CD4-positive, alpha-beta memory T cell (primary cell): ENCODE measurements at regions of chr22 and their contacts with region 1.

Region 1: DNA sequence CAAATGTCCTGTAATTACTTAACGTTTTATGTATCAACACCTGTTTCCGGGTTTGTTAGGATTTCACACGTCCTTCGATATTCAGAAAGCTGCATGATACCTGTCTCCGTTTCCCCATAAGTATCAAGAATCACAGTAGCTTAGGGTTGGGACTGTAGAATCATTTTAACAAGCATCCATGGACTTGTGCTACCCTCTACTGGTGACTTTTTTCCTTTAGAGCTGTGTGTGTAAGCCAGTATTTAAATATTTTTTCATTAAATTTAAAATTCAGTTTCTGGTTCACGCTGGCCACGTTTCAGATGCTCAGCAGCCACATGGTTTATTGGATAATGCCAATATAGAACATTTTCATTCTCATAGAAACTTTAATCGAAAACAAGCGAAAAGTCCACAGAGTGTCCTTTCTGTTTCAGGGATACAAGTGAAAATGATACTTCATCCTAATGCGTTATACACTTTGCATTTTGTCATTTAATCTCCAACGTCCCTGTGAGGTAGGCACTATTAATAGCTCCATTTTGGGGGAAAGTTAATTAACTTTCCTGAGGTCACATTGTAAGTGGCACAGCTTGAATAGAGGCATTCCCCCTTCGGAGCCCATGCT is 61.5 kb upstream of the SLC25A18 start:
- DNase-seq: peak; percentile 45 to 62 (median 61)
- H3K4me3 ChIP-seq: no peak overlapping the region
- H3K4me3 Mint-ChIP-seq: no peak overlapping the region
- H3K27ac ChIP-seq: no peak overlapping the region
- H3K27ac Mint-ChIP-seq: no peak overlapping the region
- H3K4me1 ChIP-seq: no peaks in the 10 kb centered on the region
- H3K4me1 Mint-ChIP-seq: peaks cover 0 to 2% (median 0%) of the 10 kb centered on the region in 4 donors
- H3K27me3 ChIP-seq: no peaks in the 10 kb centered on the region
- H3K27me3 Mint-ChIP-seq: peaks cover 5 to 9% of the 10 kb centered on the region in 2 donors

Region 2: DNA sequence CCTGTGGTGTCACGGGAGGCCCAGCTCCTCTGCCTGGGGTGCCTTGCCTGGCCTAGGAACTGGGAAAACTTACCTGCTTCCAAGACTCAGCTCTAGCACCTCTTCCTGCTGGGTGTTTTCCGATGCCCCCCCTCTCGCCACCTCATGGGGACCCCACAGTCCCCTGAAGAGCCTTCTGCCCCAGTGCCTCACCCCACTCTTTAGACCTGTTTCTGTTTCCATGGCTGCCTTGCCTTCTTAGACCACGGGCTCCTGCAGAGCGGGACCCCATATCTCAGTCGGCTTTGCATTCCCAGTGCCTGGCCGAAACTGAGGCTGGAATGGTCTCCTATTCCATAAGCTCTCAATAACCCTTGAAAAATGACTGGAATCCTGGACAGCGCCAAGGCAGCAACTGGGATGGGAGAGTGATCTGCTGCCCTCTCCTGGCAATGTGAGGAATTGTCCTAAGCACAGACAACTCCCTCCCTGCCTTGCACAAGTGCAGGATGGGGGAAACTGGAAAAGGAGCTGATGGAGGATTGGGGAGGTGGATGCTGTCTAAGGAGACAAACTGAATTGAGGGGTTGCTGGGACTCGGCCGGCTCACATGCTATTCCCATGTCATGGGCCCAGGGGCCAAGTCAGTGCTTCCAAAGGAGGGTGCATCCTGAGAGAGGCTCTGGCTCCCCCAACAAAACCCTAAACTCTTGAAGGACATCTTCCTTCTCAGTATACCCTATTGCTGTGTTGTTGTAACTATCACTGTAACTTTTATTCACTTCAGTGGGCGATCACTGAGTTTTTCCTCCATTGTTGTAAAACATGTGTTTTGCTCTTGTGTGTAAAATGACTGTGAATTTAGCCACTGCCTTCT is 443.6 kb before region 1 on chr22:
- CTCF ChIA-PET with region 1: interaction called, 11 read pairs
- POLR2A ChIA-PET with region 1: no interaction called
- intact Hi-C with region 1: no loop called
- DNase-seq: peak in 4 of 5 donors; percentile 28 to 44 (median 33)
- H3K4me3 ChIP-seq: no peak overlapping the region
- H3K4me3 Mint-ChIP-seq: no peak overlapping the region
- H3K27ac ChIP-seq: no peak overlapping the region
- H3K27ac Mint-ChIP-seq: peak overlapping the region in 2 of 7 donors; percentile 56 to 74
- H3K4me1 ChIP-seq: no peaks in the 10 kb centered on the region
- H3K4me1 Mint-ChIP-seq: peaks cover 0 to 5% (median 3%) of the 10 kb centered on the region in 4 donors
- H3K27me3 ChIP-seq: no peaks in the 10 kb centered on the region
- H3K27me3 Mint-ChIP-seq: peaks cover 6 to 12% of the 10 kb centered on the region in 2 donors

Region 3: GRCh38 chr22:17077255-17077654 is 424.5 kb before region 1 on chr22:
- CTCF ChIA-PET with region 1: interaction called, 118 read pairs
- POLR2A ChIA-PET with region 1: interaction called, 7 read pairs
- intact Hi-C with region 1: loop called (anchors 1 kb)
- DNase-seq: no peak
- H3K4me3 ChIP-seq: no peak overlapping the region
- H3K4me3 Mint-ChIP-seq: no peak overlapping the region
- H3K27ac ChIP-seq: no peak overlapping the region
- H3K27ac Mint-ChIP-seq: no peak overlapping the region
- H3K4me1 ChIP-seq: peaks cover 11% of the 10 kb centered on the region
- H3K4me1 Mint-ChIP-seq: peaks cover 7 to 19% (median 14%) of the 10 kb centered on the region in 4 donors
- H3K27me3 ChIP-seq: peaks cover 5% of the 10 kb centered on the region
- H3K27me3 Mint-ChIP-seq: no peaks in the 10 kb centered on the region

Region 4: DNA sequence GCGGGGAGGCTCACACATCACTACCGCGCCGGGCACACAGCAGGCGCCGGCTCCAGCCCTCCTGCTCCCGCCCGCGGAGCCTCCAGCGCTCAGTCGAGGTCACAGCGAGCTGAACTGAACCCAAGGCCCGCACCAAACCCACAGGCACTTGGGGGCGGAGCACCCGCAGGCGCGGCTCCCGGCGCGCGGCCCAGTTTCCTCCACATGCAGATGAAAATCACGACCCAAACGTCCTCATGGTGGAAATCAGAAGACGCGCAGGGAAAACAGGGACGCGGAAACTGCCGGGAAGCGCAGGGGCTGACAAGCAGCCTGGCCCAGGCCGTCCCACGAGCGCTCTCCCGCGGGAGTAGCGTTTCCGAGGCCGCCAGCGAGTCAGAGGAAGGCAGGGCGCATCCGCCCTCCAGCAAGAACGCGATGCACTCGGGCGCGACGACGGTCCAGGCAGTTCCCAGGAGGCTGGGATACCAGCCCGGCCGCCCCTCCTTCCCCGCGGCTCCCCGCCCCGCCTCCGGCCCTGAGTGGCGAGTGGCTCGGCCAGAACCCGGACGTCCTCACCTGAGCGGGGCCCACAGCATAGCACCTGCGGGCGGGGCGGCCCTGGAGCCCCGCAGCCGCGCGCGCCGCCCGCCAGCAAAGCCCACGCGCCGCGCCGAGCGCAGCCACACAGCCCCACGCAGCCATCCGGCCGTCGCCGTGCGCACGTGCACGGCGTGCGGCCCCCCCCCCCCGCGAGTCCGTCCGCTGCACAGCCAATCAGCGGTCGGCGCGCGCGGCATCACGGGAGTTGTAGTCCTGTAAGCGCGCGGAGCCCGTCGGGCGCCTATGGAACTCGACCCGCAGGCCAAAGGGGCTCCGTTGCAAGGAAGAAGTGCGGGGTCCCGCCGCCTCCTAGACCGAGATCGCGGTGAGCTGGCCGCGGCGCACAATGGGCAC is 342.9 kb before region 1 on chr22 and contains the start of gene HDHD5:
- CTCF ChIA-PET with region 1: interaction called, 5 read pairs
- POLR2A ChIA-PET with region 1: interaction called, 3 read pairs
- intact Hi-C with region 1: loop called (anchors 5 kb)
- DNase-seq: peak; percentile 81 to 87 (median 85)
- H3K4me3 ChIP-seq: peak within 1 kb of the TSS; percentile 52 to 81
- H3K4me3 Mint-ChIP-seq: peak within 1 kb of the TSS; percentile 84 to 90 (median 88)
- H3K27ac ChIP-seq: peak within 1 kb of the TSS; percentile 46
- H3K27ac Mint-ChIP-seq: peak within 1 kb of the TSS; percentile 77 to 88 (median 85)
- H3K4me1 ChIP-seq: peaks cover 36% of the 10 kb centered on the region
- H3K4me1 Mint-ChIP-seq: peaks cover 17 to 48% (median 24%) of the 10 kb centered on the region in 4 donors
- H3K27me3 ChIP-seq: no peaks in the 10 kb centered on the region
- H3K27me3 Mint-ChIP-seq: no peaks in the 10 kb centered on the region
- total RNA-seq, gene HDHD5: 23.1 to 23.3 TPM

Region 5: DNA sequence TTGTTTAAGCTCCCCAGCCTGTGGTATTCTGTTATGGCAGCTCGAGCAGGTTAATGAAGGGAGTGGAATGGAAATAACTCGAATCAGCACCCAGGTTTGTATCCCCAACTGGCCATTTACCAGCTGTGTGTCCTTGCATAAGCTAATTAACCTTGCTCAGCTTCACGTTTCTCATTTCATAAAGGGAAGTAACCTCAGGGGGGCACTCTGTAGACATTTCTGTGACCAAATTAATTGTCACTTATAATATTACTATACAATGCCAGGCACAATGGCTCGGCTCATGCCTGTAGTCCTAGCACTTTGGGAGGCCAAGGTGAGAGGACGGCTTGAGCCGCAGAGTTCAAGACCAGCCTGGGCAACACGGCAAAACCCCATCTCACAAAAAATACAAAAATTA is 296.4 kb before region 1 on chr22:
- CTCF ChIA-PET with region 1: interaction called, 7 read pairs
- POLR2A ChIA-PET with region 1: interaction called, 4 read pairs
- intact Hi-C with region 1: loop called (anchors 1 kb)
- DNase-seq: no peak
- H3K4me3 ChIP-seq: no peak overlapping the region
- H3K4me3 Mint-ChIP-seq: no peak overlapping the region
- H3K27ac ChIP-seq: no peak overlapping the region
- H3K27ac Mint-ChIP-seq: peak overlapping the region in 2 of 7 donors; percentile 36 to 59
- H3K4me1 ChIP-seq: no peaks in the 10 kb centered on the region
- H3K4me1 Mint-ChIP-seq: peaks cover 9 to 24% (median 10%) of the 10 kb centered on the region in 4 donors
- H3K27me3 ChIP-seq: no peaks in the 10 kb centered on the region
- H3K27me3 Mint-ChIP-seq: no peaks in the 10 kb centered on the region

Region 6: GRCh38 chr22:17628304-17629166 is 126.8 kb after region 1 on chr22 and contains the start of gene ATP6V1E1:
- CTCF ChIA-PET with region 1: no interaction called
- POLR2A ChIA-PET with region 1: no interaction called
- intact Hi-C with region 1: no loop called
- DNase-seq: peak; percentile 93 to 97 (median 94)
- H3K4me3 ChIP-seq: peak within 1 kb of the TSS; percentile 80 to 95
- H3K4me3 Mint-ChIP-seq: peak within 1 kb of the TSS; percentile 95 to 99 (median 97)
- H3K27ac ChIP-seq: peak within 1 kb of the TSS; percentile 95
- H3K27ac Mint-ChIP-seq: peak within 1 kb of the TSS; percentile 96 to 99 (median 98)
- H3K4me1 ChIP-seq: peaks cover 50% of the 10 kb centered on the region
- H3K4me1 Mint-ChIP-seq: peaks cover 9 to 45% (median 25%) of the 10 kb centered on the region in 4 donors
- H3K27me3 ChIP-seq: no peaks in the 10 kb centered on the region
- H3K27me3 Mint-ChIP-seq: no peaks in the 10 kb centered on the region
- total RNA-seq, gene ATP6V1E1: 88.0 to 88.7 TPM